ENCODE measurements at regions of chr1 and their contacts with region 1.

Region 1: GRCh38 chr1:225474986-225475820 is 47.4 kb upstream of the LBR start:
- DNase-seq: peak; percentile 44 to 90 (median 70)
- ATAC-seq: peak; percentile 86
- H3K4me3 ChIP-seq: no peak overlapping the region
- H3K4me3 Mint-ChIP-seq: no peak overlapping the region
- H3K27ac ChIP-seq: no peak overlapping the region
- H3K27ac Mint-ChIP-seq: no peak overlapping the region
- H3K4me1 ChIP-seq: peaks cover 53% of the 10 kb centered on the region
- H3K4me1 Mint-ChIP-seq: peaks cover 48% of the 10 kb centered on the region
- H3K27me3 ChIP-seq: no peaks in the 10 kb centered on the region
- H3K27me3 Mint-ChIP-seq: no peaks in the 10 kb centered on the region
- CTCF ChIP-seq: peak; percentile 100

Region 2: DNA sequence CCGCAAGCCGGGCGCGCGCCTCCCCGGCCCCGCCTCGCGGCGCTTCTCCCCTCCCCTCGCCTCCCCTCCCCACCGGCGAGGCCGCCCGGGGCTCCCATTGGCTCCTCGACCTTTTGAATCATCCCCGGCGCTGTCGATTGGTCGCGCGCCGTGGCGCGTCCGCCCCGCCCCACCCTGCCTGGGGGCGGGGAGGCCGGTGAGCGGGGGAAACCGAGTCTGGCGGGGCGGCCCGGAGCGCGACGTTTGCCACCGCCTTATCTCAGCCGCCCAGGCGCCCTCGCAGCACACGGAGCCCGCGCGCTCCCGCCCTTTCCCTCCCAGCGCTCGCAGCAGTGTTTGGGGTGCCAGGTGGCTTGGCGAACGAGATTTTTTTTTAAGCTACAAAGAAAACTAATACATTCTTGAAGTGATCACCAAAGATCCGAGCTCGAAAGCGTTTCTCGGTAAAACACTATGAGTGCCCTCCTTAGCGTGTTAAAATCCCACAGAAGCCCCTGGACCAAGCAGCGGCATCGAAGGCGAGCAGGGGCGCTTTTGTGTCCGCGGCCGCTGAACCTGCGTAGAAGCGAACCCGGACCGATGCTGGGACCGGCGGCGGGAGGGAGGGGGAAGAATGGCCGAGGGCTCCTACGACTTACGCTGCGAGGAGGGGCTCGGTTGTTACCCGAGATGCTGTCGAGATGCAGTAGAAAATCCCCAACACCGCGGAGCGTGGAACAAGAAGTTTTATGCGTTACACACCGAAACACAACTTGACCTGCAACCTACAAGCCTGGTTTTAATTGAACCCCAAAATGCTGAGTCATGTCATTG is 46.9 kb before region 1 on chr1:
- CTCF ChIA-PET with region 1: interaction called, 17 read pairs
- POLR2A ChIA-PET with region 1: interaction called, 49 read pairs
- intact Hi-C with region 1: loop called in 1 of 2 experiments (anchors 2 kb)
- DNase-seq: peak; percentile 80 to 96 (median 91)
- ATAC-seq: peak; percentile 92
- H3K4me3 ChIP-seq: peak overlapping the region; percentile 80 to 89
- H3K4me3 Mint-ChIP-seq: peak overlapping the region; percentile 93
- H3K27ac ChIP-seq: peak overlapping the region; percentile 69 to 70
- H3K27ac Mint-ChIP-seq: peak overlapping the region; percentile 91
- H3K4me1 ChIP-seq: peaks cover 39% of the 10 kb centered on the region
- H3K4me1 Mint-ChIP-seq: peaks cover 44% of the 10 kb centered on the region
- H3K27me3 ChIP-seq: no peaks in the 10 kb centered on the region
- H3K27me3 Mint-ChIP-seq: no peaks in the 10 kb centered on the region
- CTCF ChIP-seq: no peak

Region 3: DNA sequence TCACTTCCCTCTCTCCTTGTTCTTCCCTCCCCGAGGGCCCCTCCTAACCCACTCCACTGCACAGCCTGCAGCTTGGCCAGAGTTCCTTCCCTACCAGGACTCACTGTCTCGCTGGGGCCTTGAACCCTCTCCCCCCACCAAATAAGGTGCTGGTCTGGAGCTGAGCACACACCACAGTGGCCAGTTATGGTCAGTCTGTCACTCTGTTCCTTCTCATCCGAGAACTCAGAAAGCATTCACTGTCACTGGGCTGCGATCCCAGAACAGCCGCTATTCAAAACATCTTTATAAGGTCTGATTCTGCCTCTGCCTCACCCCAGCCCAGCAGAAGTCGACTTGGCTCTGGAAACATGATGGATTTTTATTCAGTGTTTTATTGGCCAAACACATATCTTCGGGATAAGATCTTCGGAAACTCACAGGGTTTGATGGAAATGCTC is 27.5 kb before region 1 on chr1:
- CTCF ChIA-PET with region 1: interaction called, 18 read pairs
- POLR2A ChIA-PET with region 1: interaction called, 7 read pairs
- intact Hi-C with region 1: no loop called
- DNase-seq: peak in 1 of 9 experiments; percentile 25
- ATAC-seq: no peak
- H3K4me3 ChIP-seq: no peak overlapping the region
- H3K4me3 Mint-ChIP-seq: no peak overlapping the region
- H3K27ac ChIP-seq: no peak overlapping the region
- H3K27ac Mint-ChIP-seq: peak overlapping the region; percentile 14
- H3K4me1 ChIP-seq: peaks cover 35% of the 10 kb centered on the region
- H3K4me1 Mint-ChIP-seq: peaks cover 51% of the 10 kb centered on the region
- H3K27me3 ChIP-seq: no peaks in the 10 kb centered on the region
- H3K27me3 Mint-ChIP-seq: no peaks in the 10 kb centered on the region
- CTCF ChIP-seq: no peak

Region 4: DNA sequence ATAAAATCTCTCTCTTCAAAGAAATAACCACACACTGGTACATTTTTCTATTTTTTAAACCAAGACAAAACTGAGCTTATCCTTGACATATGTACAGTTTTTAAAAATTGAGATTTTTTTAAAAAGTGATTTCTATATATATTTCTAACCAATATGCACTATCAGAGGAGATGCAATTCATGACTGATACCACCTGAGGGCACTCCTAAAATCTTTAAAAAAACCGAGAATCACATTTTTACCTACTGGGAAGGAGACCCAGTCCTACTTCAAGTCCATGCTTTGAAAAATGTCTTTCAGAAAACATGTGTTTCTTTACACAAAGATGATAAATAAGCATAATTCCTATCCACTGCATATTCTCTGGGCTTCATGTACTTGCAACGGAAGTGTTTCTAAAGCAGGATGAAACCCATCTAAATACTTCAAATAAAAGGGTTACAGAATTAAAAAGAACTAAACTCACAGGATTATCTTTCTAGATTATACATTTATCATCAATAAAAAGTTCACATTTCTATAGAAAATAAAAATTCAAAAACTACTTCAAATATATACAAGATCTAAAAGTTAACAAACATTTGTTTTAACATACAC is 79.1 kb after region 1 on chr1:
- CTCF ChIA-PET with region 1: interaction called, 11 read pairs
- POLR2A ChIA-PET with region 1: no interaction called
- intact Hi-C with region 1: loop called in 1 of 2 experiments (anchors 5 kb)
- DNase-seq: peak in 2 of 9 experiments; percentile 26 to 43
- ATAC-seq: peak; percentile 40
- H3K4me3 ChIP-seq: no peak overlapping the region
- H3K4me3 Mint-ChIP-seq: no peak overlapping the region
- H3K27ac ChIP-seq: no peak overlapping the region
- H3K27ac Mint-ChIP-seq: no peak overlapping the region
- H3K4me1 ChIP-seq: no peaks in the 10 kb centered on the region
- H3K4me1 Mint-ChIP-seq: no peaks in the 10 kb centered on the region
- H3K27me3 ChIP-seq: no peaks in the 10 kb centered on the region
- H3K27me3 Mint-ChIP-seq: peaks cover 2% of the 10 kb centered on the region
- CTCF ChIP-seq: peak; percentile 63

Region 5: GRCh38 chr1:225603538-225604354 is 128.5 kb after region 1 on chr1:
- CTCF ChIA-PET with region 1: no interaction called
- POLR2A ChIA-PET with region 1: no interaction called
- intact Hi-C with region 1: no loop called
- DNase-seq: no peak
- ATAC-seq: no peak
- H3K4me3 ChIP-seq: no peak overlapping the region
- H3K4me3 Mint-ChIP-seq: no peak overlapping the region
- H3K27ac ChIP-seq: no peak overlapping the region
- H3K27ac Mint-ChIP-seq: no peak overlapping the region
- H3K4me1 ChIP-seq: no peaks in the 10 kb centered on the region
- H3K4me1 Mint-ChIP-seq: no peaks in the 10 kb centered on the region
- H3K27me3 ChIP-seq: no peaks in the 10 kb centered on the region
- H3K27me3 Mint-ChIP-seq: peaks cover 3% of the 10 kb centered on the region
- CTCF ChIP-seq: no peak

Region 6: GRCh38 chr1:225977937-225978748 is 502.9 kb after region 1 on chr1:
- CTCF ChIA-PET with region 1: interaction called, 112 read pairs
- POLR2A ChIA-PET with region 1: no interaction called
- intact Hi-C with region 1: loop called (anchors 1 kb)
- DNase-seq: peak in 3 of 9 experiments; percentile 27 to 45 (median 33)
- ATAC-seq: no peak
- H3K4me3 ChIP-seq: no peak overlapping the region
- H3K4me3 Mint-ChIP-seq: no peak overlapping the region
- H3K27ac ChIP-seq: no peak overlapping the region
- H3K27ac Mint-ChIP-seq: no peak overlapping the region
- H3K4me1 ChIP-seq: no peaks in the 10 kb centered on the region
- H3K4me1 Mint-ChIP-seq: peaks cover 4% of the 10 kb centered on the region
- H3K27me3 ChIP-seq: no peaks in the 10 kb centered on the region
- H3K27me3 Mint-ChIP-seq: no peaks in the 10 kb centered on the region
- CTCF ChIP-seq: no peak

Region 7: DNA sequence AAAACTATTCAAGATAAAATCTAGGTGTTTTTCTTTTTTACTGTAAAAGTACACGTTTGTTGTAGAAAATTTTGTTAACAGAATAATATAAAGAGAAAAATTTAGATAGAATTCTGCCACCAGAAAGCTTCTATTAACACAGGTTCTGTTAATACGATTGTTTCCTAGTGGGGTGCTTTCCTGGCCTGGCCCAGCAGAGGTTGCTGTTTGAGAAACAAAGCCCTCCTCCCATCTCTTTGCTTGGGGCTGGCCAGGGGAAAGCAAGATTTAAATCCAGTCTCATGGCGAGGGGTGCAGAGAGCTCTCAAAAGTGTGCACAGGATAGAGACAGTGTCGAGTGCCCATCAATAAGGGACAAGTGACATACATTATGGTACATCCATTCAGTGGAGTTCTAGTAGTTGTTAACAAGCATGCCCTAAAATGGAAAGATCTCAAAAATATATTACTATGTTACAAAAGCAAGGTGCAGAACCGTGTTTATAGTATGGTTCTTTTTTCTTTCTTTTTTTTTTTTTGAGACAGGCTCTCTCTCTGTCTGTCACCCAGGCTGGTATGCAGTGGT is 725.9 kb after region 1 on chr1:
- CTCF ChIA-PET with region 1: interaction called, 3 read pairs
- POLR2A ChIA-PET with region 1: no interaction called
- intact Hi-C with region 1: loop called in 1 of 2 experiments (anchors 1 kb)
- DNase-seq: no peak
- ATAC-seq: no peak
- H3K4me3 ChIP-seq: no peak overlapping the region
- H3K4me3 Mint-ChIP-seq: no peak overlapping the region
- H3K27ac ChIP-seq: no peak overlapping the region
- H3K27ac Mint-ChIP-seq: no peak overlapping the region
- H3K4me1 ChIP-seq: no peaks in the 10 kb centered on the region
- H3K4me1 Mint-ChIP-seq: no peaks in the 10 kb centered on the region
- H3K27me3 ChIP-seq: no peaks in the 10 kb centered on the region
- H3K27me3 Mint-ChIP-seq: peaks cover 12% of the 10 kb centered on the region
- CTCF ChIP-seq: no peak